ENCODE measurements at regions of chr4 and their contacts with region 1.

Region 1: DNA sequence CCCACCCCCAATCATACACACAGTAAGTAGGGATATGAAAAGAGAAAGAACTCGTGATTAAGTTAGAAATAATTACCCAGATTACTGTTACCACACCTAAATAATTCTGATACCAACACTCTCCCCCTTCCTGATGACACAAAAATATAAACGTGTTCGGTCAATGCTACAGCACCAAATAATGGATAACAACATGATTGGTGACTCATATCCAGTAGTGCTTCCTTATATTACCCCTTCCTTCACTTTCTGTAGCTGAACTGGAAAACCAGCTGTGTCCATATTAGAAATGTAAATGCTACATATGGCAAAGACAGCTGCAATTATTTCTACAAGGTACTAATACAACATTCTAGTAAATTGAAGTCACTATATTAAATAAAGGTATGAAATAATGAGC is 20.8 kb downstream of the EIF4E start:
- DNase-seq: no peak
- ATAC-seq: no peak
- H3K4me3 ChIP-seq: no peak overlapping the region
- H3K4me3 Mint-ChIP-seq: no peak overlapping the region
- H3K27ac ChIP-seq: no peak overlapping the region
- H3K27ac Mint-ChIP-seq: peak overlapping the region in 1 of 2 donors; percentile 4
- H3K4me1 ChIP-seq: peaks cover 4 to 28% of the 10 kb centered on the region in 2 experiments
- H3K4me1 Mint-ChIP-seq: peaks cover 58 to 75% (median 74%) of the 10 kb centered on the region in 3 donors
- H3K27me3 ChIP-seq: no peaks in the 10 kb centered on the region
- H3K27me3 Mint-ChIP-seq: no peaks in the 10 kb centered on the region

Region 2: GRCh38 chr4:98887145-98887544 is 21.0 kb before region 1 on chr4:
- CTCF ChIA-PET with region 1: no interaction called
- POLR2A ChIA-PET with region 1: interaction called in 1 of 2 experiments, 12 read pairs
- DNase-seq: no peak
- ATAC-seq: no peak
- H3K4me3 ChIP-seq: no peak overlapping the region
- H3K4me3 Mint-ChIP-seq: no peak overlapping the region
- H3K27ac ChIP-seq: no peak overlapping the region
- H3K27ac Mint-ChIP-seq: no peak overlapping the region
- H3K4me1 ChIP-seq: no peaks in the 10 kb centered on the region
- H3K4me1 Mint-ChIP-seq: peaks cover 8 to 9% (median 8%) of the 10 kb centered on the region in 3 donors
- H3K27me3 ChIP-seq: no peaks in the 10 kb centered on the region
- H3K27me3 Mint-ChIP-seq: no peaks in the 10 kb centered on the region

Region 3: GRCh38 chr4:98939892-98940298 is 31.7 kb after region 1 on chr4:
- CTCF ChIA-PET with region 1: no interaction called
- POLR2A ChIA-PET with region 1: interaction called in 1 of 2 experiments, 15 read pairs
- DNase-seq: peak in 1 of 35 experiments; percentile 52
- ATAC-seq: peak in 1 of 4 experiments; percentile 48
- H3K4me3 ChIP-seq: no peak overlapping the region
- H3K4me3 Mint-ChIP-seq: no peak overlapping the region
- H3K27ac ChIP-seq: no peak overlapping the region
- H3K27ac Mint-ChIP-seq: no peak overlapping the region
- H3K4me1 ChIP-seq: no peaks in the 10 kb centered on the region
- H3K4me1 Mint-ChIP-seq: peaks cover 9 to 14% (median 10%) of the 10 kb centered on the region in 3 donors
- H3K27me3 ChIP-seq: no peaks in the 10 kb centered on the region
- H3K27me3 Mint-ChIP-seq: no peaks in the 10 kb centered on the region

Measured in T-cell (primary cell).